HCT116 (cell line): ENCODE measurements at regions of chr9 and their contacts with region 1.

Region 1: GRCh38 chr9:128818099-128818838 is at the start of gene ENDOG:
- DNase-seq: peak; percentile 93
- ATAC-seq: peak; percentile 82
- H3K4me3 ChIP-seq: peak within 1 kb of the TSS; percentile 54 to 71
- H3K27ac ChIP-seq: peak within 1 kb of the TSS; percentile 85
- H3K4me1 ChIP-seq: peaks cover 12 to 23% of the 10 kb centered on the region in 2 experiments; a peak in 3 of 4 replicates
- H3K27me3 ChIP-seq: no peaks in the 10 kb centered on the region
- CTCF ChIP-seq: peak; percentile 46 to 92 (median 70); a peak in 5 of 6 replicates
- POLR2A ChIP-seq: peak; percentile 96
- RAD21 ChIP-seq: peak; percentile 28; the same call in 1 of the 2 replicates
- total RNA-seq, gene ENDOG: 27.2 TPM

Region 2: GRCh38 chr9:128829477-128830251 is 11.4 kb after region 1 on chr9 and contains the start of gene SPOUT1:
- CTCF ChIA-PET with region 1: interaction called, 23 read pairs
- POLR2A ChIA-PET with region 1: interaction called, 9 read pairs
- RAD21 ChIA-PET with region 1: interaction called in 1 of 2 experiments, 4 read pairs
- intact Hi-C with region 1: no loop called
- DNase-seq: peak; percentile 81
- ATAC-seq: peak; percentile 94
- H3K4me3 ChIP-seq: peak within 1 kb of the TSS; percentile 95 to 97
- H3K27ac ChIP-seq: peak within 1 kb of the TSS; percentile 78
- H3K4me1 ChIP-seq: peaks cover 11 to 17% of the 10 kb centered on the region in 2 experiments
- H3K27me3 ChIP-seq: no peaks in the 10 kb centered on the region
- CTCF ChIP-seq: no peak
- POLR2A ChIP-seq: peak; percentile 80
- RAD21 ChIP-seq: no peak
- total RNA-seq, gene SPOUT1: 70.4 TPM